Dendritic cell treated with granulocyte-macrophage colony-stimulating factor and Interleukin-4, amounts not matched to agents 40 ng/mL and 50 ng/mL, for 4 days (primary cell): ENCODE measurements at regions of chr7 and their contacts with region 1.

Region 1: DNA sequence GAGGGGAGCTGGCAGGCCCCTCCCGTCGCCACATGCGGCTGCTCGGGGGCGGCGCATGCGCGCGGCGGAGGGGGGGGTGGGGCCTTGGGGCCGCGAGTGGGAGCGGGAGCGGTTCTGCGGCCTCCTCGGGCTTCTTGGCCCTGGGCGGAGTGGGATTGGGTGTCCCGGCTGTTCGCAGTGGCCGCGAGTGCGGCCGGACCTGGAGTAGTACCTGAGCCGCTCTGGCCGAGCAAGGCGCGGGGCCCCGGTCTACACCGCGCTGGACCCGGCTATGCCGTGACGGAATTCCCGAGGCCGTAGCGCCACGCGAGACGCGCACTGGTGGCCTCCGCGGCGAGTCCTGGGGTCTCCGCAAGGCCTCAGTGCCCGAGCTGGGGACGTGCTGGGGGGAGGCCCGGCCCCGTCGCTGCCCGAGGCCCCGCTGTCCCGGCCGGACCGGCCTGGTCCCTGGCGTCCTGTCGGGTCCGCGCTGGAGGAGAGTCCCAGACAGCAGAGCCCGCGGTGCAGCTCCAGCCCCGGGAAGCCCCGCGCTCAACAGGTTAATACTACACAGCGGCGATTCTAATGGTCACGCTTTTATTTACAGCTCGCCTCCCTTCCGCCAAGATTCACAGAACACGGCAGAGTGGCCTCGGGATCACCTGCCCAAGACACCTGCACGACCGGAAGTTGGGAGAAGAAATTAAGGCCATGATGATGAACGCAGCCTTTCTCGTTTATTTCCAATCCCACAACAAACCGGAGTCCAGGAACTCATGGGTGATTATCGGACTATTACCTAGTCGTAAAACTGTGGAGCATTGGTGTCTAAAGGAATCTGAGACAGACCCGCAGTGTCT is 671 bp upstream of the PAXIP1 start:
- H3K4me3 Mint-ChIP-seq: peak overlapping the region; percentile 81
- H3K27ac Mint-ChIP-seq: peak overlapping the region; percentile 68
- H3K4me1 Mint-ChIP-seq: peaks cover 9% of the 10 kb centered on the region
- H3K27me3 Mint-ChIP-seq: no peaks in the 10 kb centered on the region

Region 2: GRCh38 chr7:154837622-154838021 is 166.0 kb before region 1 on chr7:
- intact Hi-C with region 1: no loop called
- H3K4me3 Mint-ChIP-seq: no peak overlapping the region
- H3K27ac Mint-ChIP-seq: no peak overlapping the region
- H3K4me1 Mint-ChIP-seq: no peaks in the 10 kb centered on the region
- H3K27me3 Mint-ChIP-seq: peaks cover 1% of the 10 kb centered on the region

Region 3: DNA sequence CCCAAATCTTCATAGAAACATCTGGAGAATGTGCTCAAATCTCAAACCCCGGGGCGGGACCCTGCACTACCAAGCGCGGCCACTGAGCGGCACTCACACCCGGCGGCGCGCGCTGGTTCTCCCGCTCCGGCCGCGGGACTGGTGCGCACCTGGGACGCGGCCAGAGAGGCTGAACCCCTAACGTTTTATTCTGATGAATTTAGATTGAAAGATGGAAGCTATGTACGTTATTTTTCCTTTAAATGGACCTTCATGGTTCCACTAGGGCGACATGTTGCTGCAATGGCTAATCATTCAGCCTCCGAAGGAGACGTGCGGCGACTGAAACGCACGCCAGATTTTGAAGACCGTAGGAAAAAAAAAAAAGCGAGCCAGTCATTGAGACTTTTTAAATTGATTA is 187.1 kb after region 1 on chr7:
- intact Hi-C with region 1: loop called (anchors 10 kb)
- H3K4me3 Mint-ChIP-seq: no peak overlapping the region
- H3K27ac Mint-ChIP-seq: no peak overlapping the region
- H3K4me1 Mint-ChIP-seq: peaks cover 26% of the 10 kb centered on the region
- H3K27me3 Mint-ChIP-seq: peaks cover 3% of the 10 kb centered on the region